ENCODE measurements at regions of chr15 and their contacts with region 1.

Region 1: GRCh38 chr15:89129123-89129815 is 41.0 kb downstream of the ABHD2 start:
- DNase-seq: peak; percentile 14 to 75 (median 66)
- ATAC-seq: peak; percentile 73
- H3K4me3 ChIP-seq: no peak overlapping the region
- H3K4me3 Mint-ChIP-seq: no peak overlapping the region
- H3K27ac ChIP-seq: peak overlapping the region in 1 of 2 experiments; percentile 79
- H3K27ac Mint-ChIP-seq: no peak overlapping the region
- H3K4me1 ChIP-seq: peaks cover 9% of the 10 kb centered on the region
- H3K4me1 Mint-ChIP-seq: peaks cover 23% of the 10 kb centered on the region
- H3K27me3 ChIP-seq: no peaks in the 10 kb centered on the region
- H3K27me3 Mint-ChIP-seq: no peaks in the 10 kb centered on the region
- CTCF ChIP-seq: peak; percentile 75

Region 2: DNA sequence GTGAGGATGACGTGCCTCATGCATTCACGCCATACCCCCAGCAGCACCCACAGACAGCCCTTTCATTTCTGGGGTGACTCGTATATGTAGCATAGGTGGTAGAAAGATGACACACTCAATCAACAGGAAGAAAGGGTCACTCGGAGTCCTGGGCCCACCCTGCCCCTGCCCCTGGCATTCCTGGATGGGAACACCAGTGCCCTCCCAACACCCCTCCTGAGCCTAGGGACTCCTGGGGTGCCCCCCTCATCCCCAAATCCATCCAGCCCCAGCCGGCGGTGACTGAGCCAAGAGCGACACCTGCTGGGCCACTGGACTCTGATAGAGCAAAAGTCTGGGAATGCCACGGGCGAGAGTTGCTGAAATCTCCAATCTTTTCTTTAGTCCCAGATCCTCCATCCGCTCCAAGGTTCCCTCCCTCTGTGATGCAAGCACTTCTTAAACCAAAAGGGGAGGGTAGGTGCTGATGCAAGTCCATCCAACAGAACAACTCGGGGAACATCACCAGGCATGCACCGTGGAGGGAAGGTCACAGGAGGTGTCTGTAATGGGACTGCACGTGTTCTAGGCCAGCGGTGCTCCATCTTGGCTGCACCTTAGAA is 295.0 kb before region 1 on chr15:
- CTCF ChIA-PET with region 1: no interaction called
- POLR2A ChIA-PET with region 1: no interaction called
- intact Hi-C with region 1: no loop called
- DNase-seq: peak in 6 of 9 experiments; percentile 4 to 55 (median 38)
- ATAC-seq: no peak
- H3K4me3 ChIP-seq: no peak overlapping the region
- H3K4me3 Mint-ChIP-seq: no peak overlapping the region
- H3K27ac ChIP-seq: no peak overlapping the region
- H3K27ac Mint-ChIP-seq: no peak overlapping the region
- H3K4me1 ChIP-seq: no peaks in the 10 kb centered on the region
- H3K4me1 Mint-ChIP-seq: no peaks in the 10 kb centered on the region
- H3K27me3 ChIP-seq: no peaks in the 10 kb centered on the region
- H3K27me3 Mint-ChIP-seq: peaks cover 8% of the 10 kb centered on the region
- CTCF ChIP-seq: no peak

Region 3: GRCh38 chr15:88904624-88905327 is 224.5 kb before region 1 on chr15:
- CTCF ChIA-PET with region 1: interaction called, 21 read pairs
- POLR2A ChIA-PET with region 1: no interaction called
- intact Hi-C with region 1: no loop called
- DNase-seq: peak; percentile 90 to 97 (median 95)
- ATAC-seq: peak; percentile 98
- H3K4me3 ChIP-seq: no peak overlapping the region
- H3K4me3 Mint-ChIP-seq: peak overlapping the region; percentile 61
- H3K27ac ChIP-seq: peak overlapping the region; percentile 36 to 66
- H3K27ac Mint-ChIP-seq: peak overlapping the region; percentile 91
- H3K4me1 ChIP-seq: peaks cover 31% of the 10 kb centered on the region
- H3K4me1 Mint-ChIP-seq: peaks cover 41% of the 10 kb centered on the region
- H3K27me3 ChIP-seq: no peaks in the 10 kb centered on the region
- H3K27me3 Mint-ChIP-seq: no peaks in the 10 kb centered on the region
- CTCF ChIP-seq: peak; percentile 87

Region 4: GRCh38 chr15:89052474-89052873 is 76.8 kb before region 1 on chr15:
- CTCF ChIA-PET with region 1: interaction called, 117 read pairs
- POLR2A ChIA-PET with region 1: no interaction called
- intact Hi-C with region 1: loop called (anchors 1 kb)
- DNase-seq: no peak
- ATAC-seq: no peak
- H3K4me3 ChIP-seq: no peak overlapping the region
- H3K4me3 Mint-ChIP-seq: no peak overlapping the region
- H3K27ac ChIP-seq: no peak overlapping the region
- H3K27ac Mint-ChIP-seq: no peak overlapping the region
- H3K4me1 ChIP-seq: peaks cover 8% of the 10 kb centered on the region
- H3K4me1 Mint-ChIP-seq: peaks cover 15% of the 10 kb centered on the region
- H3K27me3 ChIP-seq: no peaks in the 10 kb centered on the region
- H3K27me3 Mint-ChIP-seq: no peaks in the 10 kb centered on the region
- CTCF ChIP-seq: no peak

Region 5: GRCh38 chr15:89087830-89088604 is 41.3 kb before region 1 on chr15 and contains the start of gene ABHD2:
- CTCF ChIA-PET with region 1: interaction called, 49 read pairs
- POLR2A ChIA-PET with region 1: interaction called, 3 read pairs
- intact Hi-C with region 1: loop called in 1 of 2 experiments (anchors 2 kb)
- DNase-seq: peak; percentile 94 to 99 (median 98)
- ATAC-seq: peak; percentile 94
- H3K4me3 ChIP-seq: peak within 1 kb of the TSS; percentile 65 to 87
- H3K4me3 Mint-ChIP-seq: no peak within 1 kb of the TSS
- H3K27ac ChIP-seq: peak within 1 kb of the TSS; percentile 50 to 69
- H3K27ac Mint-ChIP-seq: peak within 1 kb of the TSS; percentile 70
- H3K4me1 ChIP-seq: peaks cover 43% of the 10 kb centered on the region
- H3K4me1 Mint-ChIP-seq: peaks cover 35% of the 10 kb centered on the region
- H3K27me3 ChIP-seq: no peaks in the 10 kb centered on the region
- H3K27me3 Mint-ChIP-seq: no peaks in the 10 kb centered on the region
- CTCF ChIP-seq: no peak
- total RNA-seq, gene ABHD2: 22.2 to 25.7 TPM

Region 6: DNA sequence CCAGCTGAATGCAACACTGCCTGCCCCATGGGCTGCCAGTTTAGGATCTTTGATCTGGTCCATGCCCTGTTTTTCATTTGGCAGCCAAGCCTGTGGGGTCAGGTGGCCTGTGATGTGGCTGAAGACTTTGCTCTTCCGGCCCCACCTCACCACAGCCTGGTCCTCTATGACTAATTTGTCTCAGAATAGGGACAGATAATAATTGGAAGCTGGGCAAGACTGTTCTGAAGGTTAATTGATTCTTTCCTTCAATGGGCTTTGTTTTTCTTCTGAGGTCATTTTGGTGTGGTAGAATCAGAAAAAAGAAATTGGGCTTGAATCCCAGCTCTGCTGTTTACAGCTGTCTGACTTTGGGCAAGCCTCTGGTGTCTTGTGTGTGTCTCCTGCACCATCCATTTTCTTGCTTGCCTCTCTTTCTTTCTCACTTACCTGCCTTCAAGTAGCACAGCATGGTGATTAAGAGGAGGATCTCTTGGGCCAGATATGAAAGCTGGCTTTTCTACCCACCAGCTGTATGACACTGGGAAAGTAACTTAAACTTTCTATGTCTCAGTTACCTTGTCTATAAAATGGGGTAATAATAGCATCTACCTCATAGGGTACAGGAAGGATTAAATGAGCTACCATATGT is 16.8 kb before region 1 on chr15:
- CTCF ChIA-PET with region 1: interaction called, 24 read pairs
- POLR2A ChIA-PET with region 1: interaction called, 3 read pairs
- intact Hi-C with region 1: no loop called
- DNase-seq: peak in 1 of 9 experiments; percentile 34
- ATAC-seq: no peak
- H3K4me3 ChIP-seq: no peak overlapping the region
- H3K4me3 Mint-ChIP-seq: no peak overlapping the region
- H3K27ac ChIP-seq: peak overlapping the region in 1 of 2 experiments; percentile 44
- H3K27ac Mint-ChIP-seq: no peak overlapping the region
- H3K4me1 ChIP-seq: peaks cover 9% of the 10 kb centered on the region
- H3K4me1 Mint-ChIP-seq: peaks cover 16% of the 10 kb centered on the region
- H3K27me3 ChIP-seq: no peaks in the 10 kb centered on the region
- H3K27me3 Mint-ChIP-seq: no peaks in the 10 kb centered on the region
- CTCF ChIP-seq: no peak

Region 7: GRCh38 chr15:89150762-89151664 is 21.7 kb after region 1 on chr15:
- CTCF ChIA-PET with region 1: interaction called, 18 read pairs
- POLR2A ChIA-PET with region 1: interaction called, 7 read pairs
- intact Hi-C with region 1: no loop called
- DNase-seq: no peak
- ATAC-seq: no peak
- H3K4me3 ChIP-seq: no peak overlapping the region
- H3K4me3 Mint-ChIP-seq: no peak overlapping the region
- H3K27ac ChIP-seq: no peak overlapping the region
- H3K27ac Mint-ChIP-seq: no peak overlapping the region
- H3K4me1 ChIP-seq: no peaks in the 10 kb centered on the region
- H3K4me1 Mint-ChIP-seq: no peaks in the 10 kb centered on the region
- H3K27me3 ChIP-seq: no peaks in the 10 kb centered on the region
- H3K27me3 Mint-ChIP-seq: no peaks in the 10 kb centered on the region
- CTCF ChIP-seq: no peak

Region 8: GRCh38 chr15:89378296-89379151 is 249.3 kb after region 1 on chr15:
- CTCF ChIA-PET with region 1: no interaction called
- POLR2A ChIA-PET with region 1: no interaction called
- intact Hi-C with region 1: no loop called
- DNase-seq: peak in 4 of 9 experiments; percentile 26 to 61 (median 58)
- ATAC-seq: peak; percentile 47
- H3K4me3 ChIP-seq: peak overlapping the region; percentile 53 to 54
- H3K4me3 Mint-ChIP-seq: peak overlapping the region; percentile 78
- H3K27ac ChIP-seq: peak overlapping the region; percentile 32 to 48
- H3K27ac Mint-ChIP-seq: peak overlapping the region; percentile 67
- H3K4me1 ChIP-seq: peaks cover 13% of the 10 kb centered on the region
- H3K4me1 Mint-ChIP-seq: peaks cover 3% of the 10 kb centered on the region
- H3K27me3 ChIP-seq: peaks cover 16 to 23% of the 10 kb centered on the region in 2 experiments
- H3K27me3 Mint-ChIP-seq: peaks cover 56% of the 10 kb centered on the region
- CTCF ChIP-seq: no peak

Measured in CD8-positive, alpha-beta T cell (primary cell).